ENCODE measurements at regions of chr4 and their contacts with region 1.

Region 1: GRCh38 chr4:30642567-30642966 is 77.6 kb upstream of the PCDH7 start:
- DNase-seq: no peak
- H3K4me3 ChIP-seq: no peak overlapping the region
- H3K27ac ChIP-seq: no peak overlapping the region
- H3K4me1 ChIP-seq: no peaks in the 10 kb centered on the region
- H3K27me3 ChIP-seq: no peaks in the 10 kb centered on the region
- CTCF ChIP-seq: no peak

Region 2: GRCh38 chr4:30172416-30172815 is 470.2 kb before region 1 on chr4:
- CTCF ChIA-PET with region 1: no interaction called
- POLR2A ChIA-PET with region 1: no interaction called
- intact Hi-C with region 1: no loop called
- DNase-seq: no peak
- H3K4me3 ChIP-seq: no peak overlapping the region
- H3K27ac ChIP-seq: no peak overlapping the region
- H3K4me1 ChIP-seq: no peaks in the 10 kb centered on the region
- H3K27me3 ChIP-seq: no peaks in the 10 kb centered on the region
- CTCF ChIP-seq: no peak

Region 3: DNA sequence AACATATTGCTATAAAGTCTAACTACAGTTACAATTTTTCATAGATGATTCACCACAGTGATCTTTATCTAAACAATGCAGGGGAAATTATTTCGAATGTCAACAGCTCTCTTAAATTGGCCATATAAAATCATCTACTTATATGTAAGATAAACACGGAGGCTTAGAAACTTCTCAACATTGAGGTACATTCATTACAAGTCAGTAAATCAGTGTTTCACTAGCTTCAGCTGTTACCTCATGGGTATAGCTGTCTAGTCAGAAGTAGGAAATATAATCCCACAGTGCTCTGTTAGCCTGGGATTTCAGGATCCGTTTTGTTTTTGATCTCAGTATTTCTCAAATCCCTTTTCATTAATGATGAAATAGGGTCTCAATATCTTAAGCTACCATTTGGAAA is 120.8 kb after region 1 on chr4:
- CTCF ChIA-PET with region 1: interaction called, 16 read pairs
- POLR2A ChIA-PET with region 1: no interaction called
- intact Hi-C with region 1: no loop called
- DNase-seq: peak in 1 of 2 experiments; percentile 76
- H3K4me3 ChIP-seq: no peak overlapping the region
- H3K27ac ChIP-seq: peak overlapping the region; percentile 44
- H3K4me1 ChIP-seq: peaks cover 18% of the 10 kb centered on the region
- H3K27me3 ChIP-seq: no peaks in the 10 kb centered on the region
- CTCF ChIP-seq: no peak

Region 4: DNA sequence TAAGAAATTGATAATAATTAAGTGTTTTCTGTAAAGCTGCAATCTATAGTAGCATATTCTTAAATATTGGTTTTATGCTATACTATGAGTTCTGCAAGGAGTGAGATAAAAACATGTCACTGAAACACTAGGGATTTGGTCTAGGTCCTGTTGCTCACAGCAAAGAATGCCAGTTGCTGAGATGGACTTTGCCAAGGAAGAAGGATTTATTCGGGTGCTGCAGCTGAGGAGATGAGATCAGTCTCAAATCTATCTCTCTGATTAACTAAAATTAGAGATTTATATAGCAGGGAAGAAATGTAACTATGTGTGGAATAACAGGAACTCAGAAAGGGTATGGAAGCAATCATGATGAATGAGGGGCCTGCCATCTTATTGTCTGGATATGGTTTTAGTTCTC is 1647.5 kb after region 1 on chr4:
- CTCF ChIA-PET with region 1: no interaction called
- POLR2A ChIA-PET with region 1: interaction called, 10 read pairs
- intact Hi-C with region 1: no loop called
- DNase-seq: no peak
- H3K4me3 ChIP-seq: no peak overlapping the region
- H3K27ac ChIP-seq: no peak overlapping the region
- H3K4me1 ChIP-seq: no peaks in the 10 kb centered on the region
- H3K27me3 ChIP-seq: no peaks in the 10 kb centered on the region
- CTCF ChIP-seq: no peak

Measured in PC-9 (cell line).